Colonic mucosa (tissue), 4 donors: ENCODE measurements at regions of chr7 and their contacts with region 1.

Region 1: DNA sequence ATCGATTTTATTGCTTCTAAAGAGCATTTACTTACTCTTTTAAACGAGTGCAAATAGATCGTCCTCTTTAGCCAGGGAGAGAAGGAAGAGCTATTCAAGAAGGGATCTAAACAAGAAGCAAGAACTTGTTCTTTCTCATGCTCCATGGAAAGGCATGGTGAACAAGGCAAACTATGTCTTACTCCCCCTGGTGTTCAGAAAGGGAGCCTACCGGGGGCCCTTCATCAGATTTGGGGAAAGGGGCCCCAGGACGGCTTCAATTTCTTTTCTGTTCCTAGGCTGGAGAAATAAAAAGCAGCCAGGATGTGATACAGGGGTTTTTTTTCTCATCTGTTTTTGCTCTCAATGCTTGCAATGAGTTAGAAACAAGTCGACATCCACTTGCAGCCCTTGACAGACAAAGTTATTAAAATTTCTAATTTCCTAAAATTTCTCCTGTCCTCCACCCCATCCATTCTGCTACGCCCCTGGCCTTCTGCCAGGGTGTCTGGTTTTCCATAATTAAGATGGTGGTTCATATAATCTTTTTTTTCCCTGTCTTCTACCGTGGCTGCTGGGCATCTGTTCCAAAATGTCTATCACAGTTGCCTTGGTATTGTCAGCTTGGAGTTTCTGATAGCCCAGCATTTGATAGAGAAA is 214.4 kb downstream of the CREB5 start:
- DNase-seq: peak; percentile 21
- H3K4me3 ChIP-seq: no peak overlapping the region
- H3K27ac ChIP-seq: no peak overlapping the region
- H3K4me1 ChIP-seq: no peaks in the 10 kb centered on the region
- H3K27me3 ChIP-seq: no peaks in the 10 kb centered on the region
- CTCF ChIP-seq: peak; percentile 56

Region 2: DNA sequence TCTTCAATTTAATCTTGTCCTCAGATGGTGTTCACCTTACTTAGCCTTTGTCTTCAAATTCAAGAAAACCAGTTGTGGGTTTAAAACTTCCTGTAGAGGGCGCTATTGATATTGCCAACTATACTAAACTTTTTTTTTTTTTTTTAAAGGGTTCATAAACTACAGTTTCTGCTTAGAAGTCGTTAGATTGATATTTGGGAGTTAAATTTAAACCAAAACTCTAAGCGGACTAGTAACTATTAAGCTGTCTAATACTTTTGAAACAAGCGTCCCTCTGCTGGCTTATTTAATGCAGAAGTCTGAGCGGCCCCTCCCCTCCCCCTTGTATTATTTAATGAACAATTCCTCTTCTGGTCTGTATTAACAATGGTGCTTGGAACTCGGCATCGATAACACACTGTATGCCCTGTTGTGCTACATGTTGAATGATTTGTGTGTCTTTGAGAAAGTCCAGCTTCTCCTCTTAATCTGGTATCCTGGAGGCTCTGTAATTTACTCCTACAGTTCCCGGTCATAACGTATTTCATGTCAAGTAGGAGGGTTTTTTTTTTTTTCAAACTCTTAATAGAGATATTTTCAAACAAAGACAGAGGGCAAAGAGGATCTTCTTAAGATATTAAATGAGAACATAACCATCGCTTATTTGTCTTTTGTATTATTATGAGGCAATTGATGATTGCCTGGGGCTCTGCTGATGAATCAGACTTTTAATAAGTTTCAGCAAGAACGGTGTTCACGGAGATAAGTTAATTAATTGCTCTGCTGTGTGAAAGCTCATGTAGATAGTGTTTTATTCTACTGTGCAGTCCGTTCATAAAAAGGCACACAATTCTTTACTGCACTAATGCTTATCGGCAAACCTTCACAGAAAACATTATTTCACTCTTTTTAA is 237.0 kb before region 1 on chr7:
- intact Hi-C with region 1: loop called (anchors 5 kb)
- DNase-seq: no peak
- H3K4me3 ChIP-seq: no peak overlapping the region
- H3K27ac ChIP-seq: no peak overlapping the region
- H3K4me1 ChIP-seq: no peaks in the 10 kb centered on the region
- H3K27me3 ChIP-seq: no peaks in the 10 kb centered on the region
- CTCF ChIP-seq: peak; percentile 64

Region 3: GRCh38 chr7:28718055-28718481 is 91.3 kb after region 1 on chr7:
- intact Hi-C with region 1: no loop called
- DNase-seq: no peak
- H3K4me3 ChIP-seq: no peak overlapping the region
- H3K27ac ChIP-seq: no peak overlapping the region
- H3K4me1 ChIP-seq: no peaks in the 10 kb centered on the region
- H3K27me3 ChIP-seq: no peaks in the 10 kb centered on the region
- CTCF ChIP-seq: no peak